GM18951 (cell line): ENCODE measurements at regions of chr10 and their contacts with region 1.

Region 1: DNA sequence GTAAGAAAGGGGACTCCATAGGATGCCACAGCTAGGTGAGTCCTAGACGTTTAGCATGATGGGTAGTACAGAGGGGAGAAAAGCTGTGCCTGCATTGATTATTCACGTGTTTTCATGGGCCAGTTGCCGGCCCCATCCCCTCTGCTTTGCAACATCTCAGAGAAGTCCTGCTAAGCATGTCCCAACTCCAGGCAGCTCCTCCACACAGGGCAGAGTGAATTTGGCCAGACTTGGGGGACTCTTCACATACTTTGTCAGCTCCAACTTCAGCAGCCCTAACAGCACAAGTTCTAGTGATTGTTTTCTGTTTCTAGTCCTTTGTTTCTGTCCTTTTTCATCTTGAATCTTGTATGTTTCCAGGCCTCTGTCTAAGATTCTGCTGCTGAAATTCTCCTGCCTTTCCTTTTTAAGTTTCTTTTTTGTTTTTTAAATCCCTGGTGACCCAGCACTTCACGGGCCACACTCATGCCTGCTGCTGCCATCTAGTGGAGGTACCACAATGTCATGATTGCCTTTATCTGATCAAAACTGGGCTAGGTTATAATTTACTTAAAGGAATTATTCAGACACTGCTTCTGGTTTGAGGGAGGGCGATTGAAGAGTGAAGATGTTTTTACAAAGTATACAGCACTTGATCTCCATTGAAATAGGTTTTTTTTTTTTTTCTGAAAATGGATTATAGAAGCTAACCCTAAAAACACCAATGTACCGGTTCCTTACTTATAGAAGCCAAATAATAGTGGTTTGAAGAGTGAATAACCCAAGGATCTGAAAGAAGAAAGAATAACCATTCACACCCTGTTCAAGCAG is 276.9 kb downstream of the CSTF2T start:
- POLR2A ChIP-seq: no peak

Region 2: DNA sequence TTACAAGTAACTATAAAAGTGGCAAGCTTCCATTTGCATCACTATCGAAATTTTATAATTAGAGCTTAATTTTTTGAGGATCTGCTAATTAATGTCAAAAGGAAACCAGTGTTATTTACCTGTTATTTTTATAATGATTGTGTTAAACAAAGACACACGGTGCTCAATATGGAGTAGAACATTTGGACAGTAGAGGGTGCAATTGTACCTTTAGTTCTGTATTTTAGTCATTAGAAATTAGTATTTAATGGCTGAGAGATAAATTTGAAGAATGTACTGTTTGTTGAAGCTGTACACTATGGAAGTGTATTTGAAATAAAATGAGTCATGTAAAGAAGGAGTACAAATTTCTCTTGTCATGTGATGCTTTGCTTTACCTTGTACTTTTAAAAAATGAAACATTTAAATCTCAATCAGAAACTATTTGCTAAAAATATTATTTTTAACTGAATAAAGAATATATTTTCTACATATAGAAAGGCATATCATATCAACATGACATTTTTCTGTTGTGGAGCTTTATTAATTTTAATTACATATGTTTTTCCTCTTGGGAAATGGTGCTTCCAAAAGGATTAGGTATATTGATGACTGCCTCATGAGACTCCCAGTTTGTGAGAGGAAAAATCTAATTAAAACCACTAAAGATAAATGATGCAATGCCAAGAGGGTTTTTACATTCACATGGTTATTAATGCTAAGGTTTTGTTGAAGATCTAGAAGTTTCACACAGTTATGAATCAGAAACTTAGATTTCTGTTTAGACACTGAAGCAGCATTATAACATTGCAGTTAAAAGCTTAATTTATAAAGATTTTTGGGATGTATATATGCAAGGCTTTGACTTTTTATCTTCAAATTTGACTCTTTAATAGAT is 358.6 kb before region 1 on chr10:
- in situ Hi-C with region 1: loop called (anchors 10 kb)
- POLR2A ChIP-seq: no peak